Activated CD8-positive, alpha-beta memory T cell treated with anti-CD3 and anti-CD28 coated beads, Interleukin-2, amount 10 ng/mL, durations not matched to agents 7 days and 5 days (primary cell): ENCODE measurements at regions of chr6 and their contacts with region 1.

Region 1: GRCh38 chr6:150079604-150080003 is 10.7 kb upstream of the ULBP3 start:
- DNase-seq: peak; percentile 74
- ATAC-seq: peak; percentile 61
- H3K4me3 Mint-ChIP-seq: peak overlapping the region; percentile 32
- H3K27ac Mint-ChIP-seq: peak overlapping the region; percentile 26
- H3K4me1 Mint-ChIP-seq: peaks cover 47% of the 10 kb centered on the region
- H3K27me3 Mint-ChIP-seq: peaks cover 52% of the 10 kb centered on the region

Region 2: DNA sequence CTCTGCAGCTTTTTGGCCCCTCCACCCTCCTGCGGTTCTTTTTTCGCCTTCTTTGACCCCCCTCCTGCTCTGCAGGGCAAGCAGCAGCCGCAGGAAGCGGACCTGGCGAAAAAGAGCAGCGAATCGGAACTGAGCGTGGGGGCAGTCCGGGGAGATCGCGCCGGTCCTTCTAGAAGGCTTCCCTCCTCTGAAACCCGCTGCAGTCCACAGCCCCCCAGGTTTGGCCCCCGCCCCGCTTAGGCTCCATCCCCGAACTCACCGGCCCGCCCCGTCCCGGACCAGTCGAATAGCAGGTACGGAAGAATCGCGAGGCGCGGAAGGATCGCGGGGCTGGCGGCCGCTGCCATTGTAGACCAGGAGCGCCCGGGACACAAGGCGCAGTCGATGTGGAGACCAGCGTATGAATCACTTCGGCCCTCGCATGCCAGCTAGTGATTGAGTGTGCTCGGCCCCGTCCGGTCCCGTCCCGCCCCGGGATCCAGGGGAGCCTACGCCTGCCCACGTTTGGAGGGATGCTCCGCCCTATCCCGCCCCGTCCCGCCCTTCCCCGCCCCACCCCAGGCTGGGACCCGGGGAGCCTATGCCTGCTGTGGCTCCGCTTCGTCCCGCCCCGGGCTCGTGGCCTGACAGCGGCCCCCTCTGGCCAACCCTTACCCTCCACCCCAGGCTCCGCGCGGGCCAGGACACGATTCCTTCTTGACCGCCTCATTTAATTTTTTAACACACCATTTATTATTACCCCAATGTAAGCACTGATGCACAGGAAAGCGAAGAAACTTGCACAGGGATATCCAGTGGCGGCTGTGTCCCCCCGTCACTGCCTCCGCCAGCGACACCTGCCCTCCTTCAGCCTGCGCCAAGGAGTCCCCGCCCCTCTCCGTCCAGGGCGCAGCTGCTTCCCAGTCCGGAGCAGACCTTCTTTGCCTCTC is 10.6 kb before region 1 on chr6 and contains the start of gene ULBP3:
- CTCF ChIA-PET with region 1: interaction called, 45 read pairs
- DNase-seq: peak; percentile 85
- ATAC-seq: peak; percentile 87
- H3K4me3 Mint-ChIP-seq: peak within 1 kb of the TSS; percentile 69
- H3K27ac Mint-ChIP-seq: peak within 1 kb of the TSS; percentile 26
- H3K4me1 Mint-ChIP-seq: peaks cover 31% of the 10 kb centered on the region
- H3K27me3 Mint-ChIP-seq: peaks cover 21% of the 10 kb centered on the region
- total RNA-seq, gene ULBP3: 1.4 to 2.1 TPM

Region 3: DNA sequence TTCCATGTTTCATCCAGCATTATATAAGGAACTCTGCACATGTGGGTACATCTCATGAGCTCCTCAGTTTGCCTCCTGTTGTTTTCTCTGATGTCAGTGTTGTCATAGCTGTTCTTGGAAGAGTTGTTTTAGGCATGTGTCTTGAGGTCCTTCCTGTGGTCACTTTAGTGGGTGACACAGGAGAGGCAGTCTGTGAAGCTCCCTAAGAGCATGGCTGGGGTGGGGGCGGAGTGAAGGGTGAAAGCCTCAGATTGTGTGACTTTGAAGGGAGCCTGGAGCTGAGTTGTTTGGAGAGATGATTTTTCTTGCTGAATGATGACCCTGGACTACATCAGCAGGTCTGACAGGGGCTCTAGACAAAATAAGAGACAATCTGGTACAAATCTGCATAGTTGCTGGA is 100.9 kb after region 1 on chr6:
- CTCF ChIA-PET with region 1: interaction called, 11 read pairs
- DNase-seq: no peak
- ATAC-seq: no peak
- H3K4me3 Mint-ChIP-seq: no peak overlapping the region
- H3K27ac Mint-ChIP-seq: no peak overlapping the region
- H3K4me1 Mint-ChIP-seq: peaks cover 6% of the 10 kb centered on the region
- H3K27me3 Mint-ChIP-seq: peaks cover 12% of the 10 kb centered on the region

Region 4: GRCh38 chr6:150334790-150335783 is 255.5 kb after region 1 on chr6:
- CTCF ChIA-PET with region 1: interaction called, 21 read pairs
- DNase-seq: peak; percentile 58
- ATAC-seq: no peak
- H3K4me3 Mint-ChIP-seq: no peak overlapping the region
- H3K27ac Mint-ChIP-seq: no peak overlapping the region
- H3K4me1 Mint-ChIP-seq: peaks cover 1% of the 10 kb centered on the region
- H3K27me3 Mint-ChIP-seq: peaks cover 13% of the 10 kb centered on the region

Region 5: GRCh38 chr6:150395398-150396009 is 315.9 kb after region 1 on chr6:
- CTCF ChIA-PET with region 1: interaction called, 51 read pairs
- DNase-seq: peak; percentile 50
- ATAC-seq: peak; percentile 71
- H3K4me3 Mint-ChIP-seq: no peak overlapping the region
- H3K27ac Mint-ChIP-seq: no peak overlapping the region
- H3K4me1 Mint-ChIP-seq: no peaks in the 10 kb centered on the region
- H3K27me3 Mint-ChIP-seq: peaks cover 32% of the 10 kb centered on the region